Activated CD4-positive, alpha-beta memory T cell treated with anti-CD3 and anti-CD28 coated beads for 36 hours (primary cell): ENCODE measurements at regions of chr9 and their contacts with region 1.

Region 1: GRCh38 chr9:69898714-69899209 is 78.1 kb downstream of the CFAP95 start:
- DNase-seq: no peak
- H3K4me3 Mint-ChIP-seq: no peak overlapping the region
- H3K27ac Mint-ChIP-seq: no peak overlapping the region
- H3K4me1 Mint-ChIP-seq: peaks cover 9% of the 10 kb centered on the region
- H3K27me3 Mint-ChIP-seq: no peaks in the 10 kb centered on the region

Region 2: DNA sequence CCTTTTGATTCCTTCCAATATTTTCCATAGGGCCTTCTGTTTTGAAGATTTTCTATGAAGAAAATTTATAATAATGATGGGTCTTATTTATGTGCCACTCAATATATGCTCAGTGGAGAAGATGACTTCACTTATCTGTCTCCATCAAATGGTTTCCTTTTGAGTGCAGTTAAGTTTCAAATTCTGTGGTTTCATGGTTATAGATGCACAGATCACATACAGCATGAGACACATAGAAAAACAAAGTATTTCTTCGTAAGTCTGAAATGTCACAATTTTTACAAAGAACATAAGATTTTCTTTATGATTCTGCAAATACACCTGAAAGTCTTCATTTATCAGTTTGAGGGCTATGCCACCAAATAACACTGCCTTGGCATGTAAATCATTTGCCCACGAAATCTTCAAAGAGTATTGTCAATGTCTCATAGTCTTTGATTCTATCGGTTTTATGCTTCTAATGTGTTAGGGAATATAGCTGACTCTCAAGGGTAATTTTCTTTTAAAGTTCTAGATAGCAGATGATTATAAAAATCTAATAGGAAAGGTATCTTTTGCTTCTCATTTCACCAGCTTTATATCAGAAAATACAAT is 64.1 kb before region 1 on chr9:
- CTCF ChIA-PET with region 1: no interaction called
- POLR2A ChIA-PET with region 1: no interaction called
- intact Hi-C with region 1: loop called (anchors 2 kb)
- DNase-seq: no peak
- H3K4me3 Mint-ChIP-seq: no peak overlapping the region
- H3K27ac Mint-ChIP-seq: no peak overlapping the region
- H3K4me1 Mint-ChIP-seq: peaks cover 11% of the 10 kb centered on the region
- H3K27me3 Mint-ChIP-seq: peaks cover 2% of the 10 kb centered on the region

Region 3: GRCh38 chr9:69885474-69885929 is 13.3 kb before region 1 on chr9:
- CTCF ChIA-PET with region 1: no interaction called
- POLR2A ChIA-PET with region 1: no interaction called
- intact Hi-C with region 1: no loop called
- DNase-seq: no peak
- H3K4me3 Mint-ChIP-seq: no peak overlapping the region
- H3K27ac Mint-ChIP-seq: no peak overlapping the region
- H3K4me1 Mint-ChIP-seq: peaks cover 4% of the 10 kb centered on the region
- H3K27me3 Mint-ChIP-seq: peaks cover 20% of the 10 kb centered on the region

Region 4: DNA sequence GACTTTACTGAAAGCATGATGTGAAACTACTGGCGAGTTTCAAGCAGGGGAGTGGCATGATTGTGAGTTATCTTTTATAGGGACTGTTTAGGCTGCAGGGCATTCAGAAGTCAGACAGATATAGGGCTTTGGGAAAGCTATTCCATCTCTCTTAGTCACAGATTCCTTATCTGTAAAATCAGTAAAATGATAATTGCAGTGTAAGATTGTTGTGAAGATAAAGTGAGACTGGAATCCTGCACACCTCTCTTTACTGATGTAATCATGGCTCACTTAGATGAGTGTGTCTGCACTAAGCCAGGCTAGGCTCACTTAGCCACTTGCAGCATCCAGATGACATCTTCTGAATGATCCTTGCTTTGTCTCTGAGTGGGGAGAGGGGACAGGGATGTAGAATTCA is 63.1 kb after region 1 on chr9:
- CTCF ChIA-PET with region 1: no interaction called
- POLR2A ChIA-PET with region 1: no interaction called
- intact Hi-C with region 1: no loop called
- DNase-seq: no peak
- H3K4me3 Mint-ChIP-seq: no peak overlapping the region
- H3K27ac Mint-ChIP-seq: no peak overlapping the region
- H3K4me1 Mint-ChIP-seq: no peaks in the 10 kb centered on the region
- H3K27me3 Mint-ChIP-seq: peaks cover 7% of the 10 kb centered on the region